ENCODE measurements at regions of chr10 and their contacts with region 1.

Region 1: GRCh38 chr10:44857363-44858016 is 53.6 kb upstream of the TMEM72 start:
- H3K4me3 ChIP-seq: no peak overlapping the region
- H3K27ac ChIP-seq: no peak overlapping the region
- H3K4me1 ChIP-seq: no peaks in the 10 kb centered on the region
- CTCF ChIP-seq: peak; percentile 83

Region 2: GRCh38 chr10:44386546-44387052 is 470.9 kb before region 1 on chr10:
- CTCF ChIA-PET with region 1: interaction called, 14 read pairs
- POLR2A ChIA-PET with region 1: no interaction called
- H3K4me3 ChIP-seq: no peak overlapping the region
- H3K27ac ChIP-seq: no peak overlapping the region; the same call in 1 of the 2 replicates
- H3K4me1 ChIP-seq: peaks cover 4% of the 10 kb centered on the region; the same call in 1 of the 2 replicates
- CTCF ChIP-seq: peak; percentile 77

Region 3: DNA sequence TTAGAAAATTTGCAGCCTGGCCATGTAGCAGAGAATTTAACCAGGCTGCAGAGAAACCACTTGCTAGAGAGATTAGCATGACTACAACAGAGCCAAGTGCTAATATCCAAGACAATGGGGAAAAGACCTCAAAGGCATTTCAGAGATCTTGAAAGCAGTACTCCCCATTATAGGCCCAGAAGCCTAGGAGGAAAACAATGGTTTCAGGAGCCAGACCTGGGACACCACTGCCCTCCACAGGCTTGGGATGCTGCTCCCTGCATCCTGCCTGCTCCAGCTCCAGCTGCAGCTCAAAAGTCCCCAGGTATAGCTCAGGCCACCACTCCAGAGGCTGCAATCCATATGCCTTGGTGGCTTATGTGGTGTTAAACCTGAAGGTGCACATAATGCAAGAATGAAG is 47.8 kb before region 1 on chr10:
- CTCF ChIA-PET with region 1: no interaction called
- POLR2A ChIA-PET with region 1: no interaction called
- H3K4me3 ChIP-seq: no peak overlapping the region
- H3K27ac ChIP-seq: no peak overlapping the region
- H3K4me1 ChIP-seq: no peaks in the 10 kb centered on the region
- CTCF ChIP-seq: peak; percentile 59

Measured in HEK293 (cell line).